Sigmoid colon (tissue), 7 donors: ENCODE measurements at regions of chr17 and their contacts with region 1.

Region 1: DNA sequence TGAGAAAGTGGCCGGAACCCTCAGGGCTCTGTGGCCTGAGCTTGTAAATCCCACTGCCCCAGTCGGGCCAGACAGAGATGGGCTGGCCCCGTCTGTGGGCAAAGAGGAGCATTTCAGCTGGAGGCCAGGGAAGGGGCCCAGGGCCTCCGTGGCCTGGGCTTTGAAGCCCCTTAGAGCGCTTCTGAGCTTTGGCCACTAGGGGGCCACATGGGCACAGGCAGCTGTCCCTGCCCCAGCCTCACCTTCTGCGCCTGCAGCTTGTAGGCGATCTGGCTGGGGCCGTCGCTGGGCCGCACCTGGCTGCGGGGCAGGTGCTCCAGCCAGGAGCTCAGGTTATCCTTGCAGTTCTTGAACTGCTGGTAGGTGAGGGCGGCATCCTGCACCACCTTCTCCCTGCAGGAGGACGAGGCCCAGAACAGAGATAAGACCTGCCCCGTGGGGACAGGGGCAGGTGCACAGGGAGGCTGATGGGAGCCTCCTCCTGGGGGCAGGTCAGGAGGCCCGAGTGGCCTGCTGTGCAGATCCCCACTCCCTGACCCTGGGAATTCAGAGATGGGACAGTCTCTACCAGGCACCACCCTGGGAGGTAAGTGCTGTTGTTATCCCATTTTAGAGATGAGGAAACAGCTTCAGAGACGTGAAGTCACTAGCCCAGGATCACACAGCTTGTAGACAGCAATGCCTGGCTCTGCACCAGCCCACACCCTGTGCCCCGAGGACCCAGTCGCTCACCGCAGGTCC is 12.8 kb downstream of the EVPL start:
- DNase-seq: peak; percentile 87
- H3K4me3 ChIP-seq: no peak overlapping the region
- H3K27ac ChIP-seq: peak overlapping the region in 1 of 4 donors; percentile 6
- H3K4me1 ChIP-seq: peaks cover 0 to 16% (median 9%) of the 10 kb centered on the region in 4 donors
- H3K27me3 ChIP-seq: no peaks in the 10 kb centered on the region
- CTCF ChIP-seq: peak; percentile 83 to 97 (median 91)
- EP300 ChIP-seq: no peak
- POLR2A ChIP-seq: no peak

Region 2: GRCh38 chr17:75909812-75910274 is 104.5 kb before region 1 on chr17:
- intact Hi-C with region 1: no loop called
- DNase-seq: no peak
- H3K4me3 ChIP-seq: no peak overlapping the region
- H3K27ac ChIP-seq: no peak overlapping the region
- H3K4me1 ChIP-seq: peaks cover 0 to 8% (median 3%) of the 10 kb centered on the region in 4 donors
- H3K27me3 ChIP-seq: no peaks in the 10 kb centered on the region
- CTCF ChIP-seq: no peak
- EP300 ChIP-seq: no peak
- POLR2A ChIP-seq: no peak

Region 3: DNA sequence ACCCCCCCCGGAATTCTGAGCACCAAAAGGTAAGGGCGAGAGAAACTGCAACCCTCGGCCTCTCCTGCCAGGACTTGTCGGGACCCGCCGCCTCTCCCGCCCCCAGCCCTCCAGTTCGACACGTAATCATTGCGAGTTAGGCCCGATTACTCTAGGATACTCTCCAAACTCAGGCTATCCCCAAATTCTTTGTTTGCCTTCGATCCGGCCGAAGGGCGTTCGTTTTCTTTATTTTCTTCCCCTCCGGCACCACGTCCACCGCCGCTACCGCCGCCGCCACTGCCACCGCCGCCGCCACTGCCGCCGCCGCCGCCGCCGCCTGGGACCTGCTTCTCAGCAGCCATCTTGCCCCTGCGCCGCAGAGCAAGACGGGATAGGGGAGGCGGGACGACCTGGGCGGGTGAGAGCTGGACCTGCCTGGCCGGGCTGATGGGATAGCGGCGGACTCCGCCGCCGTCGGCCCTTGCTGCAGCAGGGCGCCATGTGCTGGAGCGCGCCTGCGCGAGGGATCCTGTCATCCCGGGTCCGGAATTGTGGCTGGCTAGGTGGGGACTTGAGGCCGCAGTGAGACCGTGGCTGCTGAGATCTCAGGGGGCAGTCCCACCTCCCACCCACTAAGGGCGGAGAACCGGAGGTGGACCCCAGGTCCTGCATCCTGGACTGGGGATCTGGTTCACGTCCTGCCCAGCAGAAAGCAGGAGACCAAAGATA is 57.9 kb after region 1 on chr17 and contains the start of gene SRP68:
- intact Hi-C with region 1: loop called (anchors 2 kb)
- DNase-seq: peak; percentile 95
- H3K4me3 ChIP-seq: peak within 1 kb of the TSS; percentile 59 to 90 (median 82)
- H3K27ac ChIP-seq: peak within 1 kb of the TSS; percentile 72 to 82 (median 80)
- H3K4me1 ChIP-seq: peaks cover 3 to 63% (median 55%) of the 10 kb centered on the region in 4 donors
- H3K27me3 ChIP-seq: peaks cover 32 to 40% (median 39%) of the 10 kb centered on the region in 3 donors
- CTCF ChIP-seq: no peak
- EP300 ChIP-seq: no peak
- POLR2A ChIP-seq: peak; percentile 28 to 61
- total RNA-seq, gene SRP68: 53.1 to 60.6 (median 53.8) TPM